ENCODE measurements at regions of chr13 and their contacts with region 1.

Region 1: DNA sequence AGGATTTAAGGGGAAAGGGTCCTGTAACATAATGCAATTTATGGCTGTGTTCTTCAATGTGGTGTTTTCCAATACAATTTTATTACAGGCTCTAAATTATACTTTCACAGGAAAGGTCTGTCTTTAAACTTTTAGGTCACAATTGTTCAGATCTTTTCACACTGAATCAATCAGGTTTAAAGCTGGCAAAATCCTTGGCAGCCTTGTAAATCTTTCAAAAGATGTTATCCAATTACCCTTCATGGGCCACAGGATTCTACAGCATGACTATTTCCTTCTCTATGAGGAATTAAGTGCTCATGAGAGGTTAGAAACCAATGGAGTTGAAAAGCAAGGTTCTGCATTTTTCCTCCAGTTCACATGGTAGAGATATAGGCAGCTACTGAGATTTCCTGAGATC is 211.5 kb upstream of the MIR17HG start:
- DNase-seq: no peak
- ATAC-seq: no peak

Region 2: GRCh38 chr13:90824027-90824426 is 311.9 kb before region 1 on chr13:
- intact Hi-C with region 1: no loop called
- DNase-seq: no peak
- ATAC-seq: no peak

Region 3: DNA sequence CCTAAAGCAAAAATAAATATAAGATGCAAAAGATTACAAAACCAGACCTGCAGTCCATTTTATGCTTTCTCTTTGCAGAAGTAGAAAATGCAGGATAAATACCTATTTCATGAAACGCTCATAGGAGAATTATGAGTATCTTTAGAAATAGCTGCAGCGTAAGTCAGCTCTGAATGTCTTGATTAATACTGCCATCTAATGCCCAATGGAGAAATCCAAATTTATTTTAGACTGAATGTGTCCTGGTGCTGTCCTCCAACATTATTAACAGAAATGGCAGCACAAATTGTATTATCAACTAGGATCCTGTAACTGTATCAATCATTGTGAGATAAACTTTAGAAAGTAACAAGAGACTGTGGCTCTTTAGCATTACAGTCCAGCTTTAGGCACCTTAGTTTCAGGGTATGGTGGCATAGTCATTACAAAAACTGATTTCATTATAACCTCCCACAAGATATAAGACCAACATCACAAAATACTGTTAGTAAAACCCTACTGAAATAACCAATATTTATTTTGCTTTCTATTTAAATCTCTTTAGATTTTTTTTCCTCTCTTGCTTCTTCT is 49.4 kb after region 1 on chr13:
- intact Hi-C with region 1: loop called (anchors 2 kb)
- DNase-seq: no peak
- ATAC-seq: peak; percentile 36